Dorsolateral prefrontal cortex (tissue), 120 donors: ENCODE measurements at regions of chr1 and their contacts with region 1.

Region 1: GRCh38 chr1:206725109-206725963 is 40.6 kb downstream of the MAPKAPK2 start:
- DNase-seq: peak in 4 of 10 donors; percentile 26 to 52 (median 36)
- H3K4me3 ChIP-seq: no peak overlapping the region
- H3K27ac ChIP-seq: no peak overlapping the region
- H3K27me3 ChIP-seq: no peaks in the 10 kb centered on the region
- CTCF ChIP-seq: peak in 53 of 56 donors; percentile 11 to 68 (median 51)

Region 2: GRCh38 chr1:206524739-206525369 is 200.5 kb before region 1 on chr1:
- intact Hi-C with region 1: no loop called
- DNase-seq: peak in 1 of 10 donors; percentile 11
- H3K4me3 ChIP-seq: no peak overlapping the region
- H3K27ac ChIP-seq: no peak overlapping the region
- H3K27me3 ChIP-seq: no peaks in the 10 kb centered on the region
- CTCF ChIP-seq: no peak

Region 3: DNA sequence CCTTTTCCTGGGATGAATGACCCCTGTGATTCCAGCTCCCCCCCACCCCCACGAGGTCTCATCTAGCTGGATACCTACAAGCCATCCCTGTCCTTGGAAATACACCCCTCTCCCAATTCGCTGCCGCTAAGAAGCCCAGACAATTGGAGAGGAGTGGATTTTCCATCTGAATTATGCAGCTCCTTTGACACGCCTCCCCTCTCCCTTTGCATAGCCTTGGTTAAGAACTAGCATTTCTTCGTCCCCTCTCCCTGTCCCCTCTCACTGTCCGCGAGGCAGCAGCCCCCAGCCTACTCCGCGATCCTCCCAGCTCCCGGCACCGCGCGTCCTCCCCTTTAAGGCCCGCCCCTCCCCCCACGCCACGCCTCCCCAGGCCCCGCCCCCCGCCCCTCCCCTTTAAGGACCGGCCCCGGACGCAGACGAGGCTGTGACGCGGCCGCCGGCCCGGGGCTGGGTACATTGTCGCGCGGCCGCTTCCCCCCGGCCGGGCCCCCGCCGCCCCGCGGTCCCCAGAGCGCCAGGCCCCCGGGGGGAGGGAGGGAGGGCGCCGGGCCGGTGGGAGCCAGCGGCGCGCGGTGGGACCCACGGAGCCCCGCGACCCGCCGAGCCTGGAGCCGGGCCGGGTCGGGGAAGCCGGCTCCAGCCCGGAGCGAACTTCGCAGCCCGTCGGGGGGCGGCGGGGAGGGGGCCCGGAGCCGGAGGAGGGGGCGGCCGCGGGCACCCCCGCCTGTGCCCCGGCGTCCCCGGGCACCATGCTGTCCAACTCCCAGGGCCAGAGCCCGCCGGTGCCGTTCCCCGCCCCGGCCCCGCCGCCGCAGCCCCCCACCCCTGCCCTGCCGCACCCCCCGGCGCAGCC is 40.6 kb before region 1 on chr1 and contains the start of gene MAPKAPK2:
- intact Hi-C with region 1: loop called in 1 of 2 experiments (anchors 1 kb)
- DNase-seq: peak; percentile 60 to 83 (median 72)
- H3K4me3 ChIP-seq: peak within 1 kb of the TSS; percentile 37 to 85 (median 75)
- H3K27ac ChIP-seq: peak within 1 kb of the TSS in 54 of 59 donors; percentile 1 to 93 (median 79)
- H3K27me3 ChIP-seq: peaks cover 0 to 6% (median 0%) of the 10 kb centered on the region in 45 donors
- CTCF ChIP-seq: peak in 3 of 56 donors; percentile 11 to 19 (median 14)
- total RNA-seq, gene MAPKAPK2: 15.8 to 65.6 (median 28.3) TPM

Region 4: GRCh38 chr1:206738370-206739366 is 13.3 kb after region 1 on chr1:
- intact Hi-C with region 1: no loop called
- DNase-seq: peak in 1 of 10 donors; percentile 28
- H3K4me3 ChIP-seq: no peak overlapping the region
- H3K27ac ChIP-seq: no peak overlapping the region
- H3K27me3 ChIP-seq: peaks cover 0 to 3% (median 0%) of the 10 kb centered on the region in 45 donors
- CTCF ChIP-seq: peak in 21 of 56 donors; percentile 6 to 42 (median 22)

Region 5: GRCh38 chr1:206784471-206784903 is 59.2 kb after region 1 on chr1:
- intact Hi-C with region 1: no loop called
- DNase-seq: no peak
- H3K4me3 ChIP-seq: no peak overlapping the region
- H3K27ac ChIP-seq: no peak overlapping the region
- H3K27me3 ChIP-seq: no peaks in the 10 kb centered on the region
- CTCF ChIP-seq: no peak